CD8-positive, alpha-beta T cell (primary cell): ENCODE measurements at regions of chr4 and their contacts with region 1.

Region 1: DNA sequence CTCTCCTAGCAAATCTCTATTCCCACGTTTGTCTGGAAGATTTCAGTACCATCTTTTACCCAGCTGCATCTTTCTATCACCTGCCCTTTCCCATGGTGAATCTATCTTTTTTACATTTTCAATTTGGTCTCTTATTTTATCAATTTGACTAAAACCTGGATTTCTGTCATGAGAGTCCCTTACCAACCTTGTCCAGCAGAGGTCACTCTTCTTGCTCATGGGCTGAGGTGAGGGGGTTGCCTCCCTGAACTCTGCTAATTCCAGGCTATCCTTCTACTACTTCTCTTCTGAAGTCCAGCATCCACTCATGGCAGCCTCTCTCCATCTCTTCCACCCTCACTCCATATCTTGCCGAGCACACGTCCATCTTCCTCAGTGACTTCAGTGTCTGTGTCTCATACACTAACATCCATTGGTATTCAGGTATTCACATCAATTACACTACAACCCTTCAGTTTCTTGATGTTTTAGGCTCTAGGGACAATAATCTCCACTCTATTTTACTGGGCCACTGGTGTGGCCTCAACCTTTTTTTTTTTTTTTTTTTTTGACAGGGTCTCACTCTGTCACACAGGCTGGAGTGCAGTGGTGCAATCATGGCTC is 17.8 kb upstream of the ZNF827 start:
- DNase-seq: peak in 7 of 9 experiments; percentile 9 to 68 (median 33)
- ATAC-seq: peak; percentile 72
- H3K4me3 ChIP-seq: no peak overlapping the region
- H3K4me3 Mint-ChIP-seq: no peak overlapping the region
- H3K27ac ChIP-seq: no peak overlapping the region
- H3K27ac Mint-ChIP-seq: no peak overlapping the region
- H3K4me1 ChIP-seq: no peaks in the 10 kb centered on the region
- H3K4me1 Mint-ChIP-seq: no peaks in the 10 kb centered on the region
- H3K27me3 ChIP-seq: no peaks in the 10 kb centered on the region
- H3K27me3 Mint-ChIP-seq: peaks cover 2% of the 10 kb centered on the region
- CTCF ChIP-seq: peak; percentile 71

Region 2: DNA sequence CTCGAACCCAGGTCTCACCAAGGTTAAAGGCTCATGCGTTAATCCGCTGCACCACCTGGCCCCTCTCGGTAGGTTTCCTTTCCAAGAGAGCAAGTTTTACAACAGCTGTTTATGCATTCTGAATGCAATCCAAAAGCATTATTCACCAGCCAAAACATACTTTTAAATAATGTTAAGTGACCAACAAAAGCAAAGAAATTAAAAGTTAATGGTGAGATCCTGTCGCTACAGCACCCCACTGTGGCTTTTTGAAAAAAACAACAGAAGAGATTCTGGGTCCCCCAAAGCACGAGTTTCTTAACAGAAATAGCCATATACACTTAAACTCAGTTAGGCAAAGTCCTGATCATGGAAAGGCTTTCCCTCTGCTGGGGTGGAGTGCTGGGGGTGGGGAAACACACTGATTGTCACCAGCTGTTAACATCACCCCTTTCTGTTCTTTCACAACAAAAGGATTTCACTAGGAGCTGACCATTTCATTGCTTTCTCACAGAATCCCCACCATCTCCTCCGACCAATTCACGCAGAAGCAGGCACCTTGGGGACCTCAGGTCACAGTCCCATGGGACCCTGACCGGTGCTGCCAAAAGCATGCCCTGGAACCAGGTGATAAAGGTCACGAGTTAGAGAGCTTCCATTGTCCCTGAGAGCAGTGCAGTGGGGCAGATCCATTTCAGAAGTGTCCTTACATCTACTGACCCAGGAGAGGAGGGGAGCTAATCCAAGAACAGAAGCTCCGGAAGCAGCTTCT is 69.0 kb before region 1 on chr4:
- CTCF ChIA-PET with region 1: interaction called, 4 read pairs
- POLR2A ChIA-PET with region 1: no interaction called
- intact Hi-C with region 1: loop called in 1 of 2 experiments (anchors 5 kb)
- DNase-seq: no peak
- ATAC-seq: no peak
- H3K4me3 ChIP-seq: no peak overlapping the region
- H3K4me3 Mint-ChIP-seq: no peak overlapping the region
- H3K27ac ChIP-seq: no peak overlapping the region
- H3K27ac Mint-ChIP-seq: no peak overlapping the region
- H3K4me1 ChIP-seq: no peaks in the 10 kb centered on the region
- H3K4me1 Mint-ChIP-seq: peaks cover 26% of the 10 kb centered on the region
- H3K27me3 ChIP-seq: no peaks in the 10 kb centered on the region
- H3K27me3 Mint-ChIP-seq: no peaks in the 10 kb centered on the region
- CTCF ChIP-seq: no peak

Region 3: GRCh38 chr4:145945431-145946155 is 10.8 kb before region 1 on chr4:
- CTCF ChIA-PET with region 1: interaction called, 11 read pairs
- POLR2A ChIA-PET with region 1: interaction called, 4 read pairs
- intact Hi-C with region 1: no loop called
- DNase-seq: no peak
- ATAC-seq: no peak
- H3K4me3 ChIP-seq: no peak overlapping the region
- H3K4me3 Mint-ChIP-seq: no peak overlapping the region
- H3K27ac ChIP-seq: no peak overlapping the region
- H3K27ac Mint-ChIP-seq: no peak overlapping the region
- H3K4me1 ChIP-seq: no peaks in the 10 kb centered on the region
- H3K4me1 Mint-ChIP-seq: no peaks in the 10 kb centered on the region
- H3K27me3 ChIP-seq: no peaks in the 10 kb centered on the region
- H3K27me3 Mint-ChIP-seq: peaks cover 8% of the 10 kb centered on the region
- CTCF ChIP-seq: no peak